ENCODE measurements at regions of chr1 and their contacts with region 1.

Region 1: GRCh38 chr1:212749821-212750535 is 41.6 kb downstream of the NSL1 start:
- H3K4me3 ChIP-seq: no peak overlapping the region
- H3K27ac ChIP-seq: no peak overlapping the region
- H3K4me1 ChIP-seq: no peaks in the 10 kb centered on the region
- CTCF ChIP-seq: peak; percentile 39; the same call in 1 of the 2 replicates

Region 2: GRCh38 chr1:212665241-212666115 is 84.5 kb before region 1 on chr1:
- CTCF ChIA-PET with region 1: interaction called, 11 read pairs
- POLR2A ChIA-PET with region 1: no interaction called
- H3K4me3 ChIP-seq: peak overlapping the region; percentile 82
- H3K27ac ChIP-seq: no peak overlapping the region; the same call in 1 of the 2 replicates
- H3K4me1 ChIP-seq: 0 out of 2 replicates have a peak, but pooled peaks cover 3% of the 10 kb centered on the region
- CTCF ChIP-seq: peak; percentile 99

Region 3: DNA sequence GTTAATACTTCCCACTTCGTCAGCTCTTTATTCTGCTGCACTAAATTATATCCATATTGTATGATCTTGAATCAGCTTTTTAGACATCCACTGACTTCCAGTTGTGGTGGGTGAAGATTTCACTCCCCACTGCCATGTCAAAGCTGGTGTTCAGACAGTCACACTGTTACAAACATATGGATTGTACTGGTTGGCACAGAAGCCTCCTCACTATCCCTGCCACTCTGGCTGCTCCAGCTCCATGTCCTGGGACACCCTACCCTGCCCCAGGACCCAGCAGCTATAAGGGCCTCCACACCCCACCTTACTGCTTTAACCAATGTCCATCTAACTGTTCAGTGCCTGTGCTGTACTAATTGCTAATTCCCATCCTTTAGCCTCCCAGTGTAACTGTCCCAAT is 18.3 kb before region 1 on chr1:
- CTCF ChIA-PET with region 1: interaction called, 73 read pairs
- POLR2A ChIA-PET with region 1: no interaction called
- H3K4me3 ChIP-seq: no peak overlapping the region
- H3K27ac ChIP-seq: no peak overlapping the region
- H3K4me1 ChIP-seq: no peaks in the 10 kb centered on the region
- CTCF ChIP-seq: no peak

Region 4: DNA sequence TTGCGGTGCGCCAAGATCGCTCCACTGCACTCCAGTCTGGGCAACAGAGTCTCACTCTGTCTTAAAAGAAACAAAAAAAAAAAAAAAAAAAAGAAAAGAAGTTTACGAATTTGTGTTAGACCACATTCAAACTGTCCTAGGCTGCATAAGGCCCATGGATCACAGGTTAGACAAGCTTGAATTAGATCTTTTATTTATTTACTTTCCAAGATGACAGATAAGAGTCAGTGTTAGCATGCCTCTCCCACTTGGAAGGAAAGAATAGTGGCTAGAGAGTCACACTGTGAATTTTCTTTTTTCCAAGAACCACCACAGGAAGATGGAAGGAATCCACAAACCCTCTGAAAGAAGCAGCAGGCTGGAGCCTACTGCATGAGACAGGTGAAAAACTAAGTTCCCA is 12.3 kb after region 1 on chr1:
- CTCF ChIA-PET with region 1: interaction called, 26 read pairs
- POLR2A ChIA-PET with region 1: no interaction called
- H3K4me3 ChIP-seq: no peak overlapping the region
- H3K27ac ChIP-seq: no peak overlapping the region
- H3K4me1 ChIP-seq: no peaks in the 10 kb centered on the region
- CTCF ChIP-seq: no peak

Region 5: DNA sequence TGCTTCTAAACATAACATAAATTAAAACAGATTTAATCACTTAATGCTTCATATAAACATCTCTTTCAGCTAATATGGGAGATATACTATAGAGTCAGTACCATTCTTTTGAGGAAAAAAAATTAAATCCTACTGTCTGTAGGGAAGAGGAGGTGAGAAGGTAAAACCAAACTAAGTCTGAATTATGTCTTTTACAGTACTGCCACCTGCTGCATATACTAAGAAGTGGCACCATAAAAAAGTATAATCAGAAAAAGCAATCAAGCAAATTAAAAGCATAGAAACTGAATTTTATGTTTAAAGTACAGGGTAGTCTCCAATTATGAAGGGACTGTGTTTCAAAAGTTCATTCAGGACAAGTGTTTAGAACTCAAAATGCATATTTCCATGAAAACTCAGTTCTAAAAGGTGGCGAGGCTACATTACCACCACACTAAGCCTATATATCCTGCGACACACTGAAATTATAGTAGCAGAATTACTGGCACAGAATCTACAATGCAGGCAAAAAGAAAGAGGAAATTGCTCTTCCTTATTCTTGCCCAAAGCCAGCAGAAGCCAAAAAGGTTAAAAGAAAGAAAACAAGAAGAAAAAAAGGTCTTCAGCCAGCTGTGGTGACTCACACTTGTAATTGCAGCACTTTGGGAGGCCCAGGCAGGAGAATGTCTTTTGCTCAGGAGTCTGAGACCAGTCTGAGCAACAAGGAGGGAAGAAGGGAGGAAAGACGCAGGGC is 32.6 kb after region 1 on chr1:
- CTCF ChIA-PET with region 1: interaction called, 13 read pairs
- POLR2A ChIA-PET with region 1: no interaction called
- H3K4me3 ChIP-seq: no peak overlapping the region
- H3K27ac ChIP-seq: no peak overlapping the region
- H3K4me1 ChIP-seq: no peaks in the 10 kb centered on the region
- CTCF ChIP-seq: peak; percentile 57